AG04450 (cell line): ENCODE measurements at regions of chr10 and their contacts with region 1.

Region 1: GRCh38 chr10:58291538-58292174 is 22.7 kb downstream of the CISD1 start:
- DNase-seq: no peak
- H3K4me3 ChIP-seq: no peak overlapping the region
- H3K27ac ChIP-seq: no peak overlapping the region
- H3K27me3 ChIP-seq: no peaks in the 10 kb centered on the region
- CTCF ChIP-seq: peak; percentile 82

Region 2: GRCh38 chr10:58152673-58153263 is 138.9 kb before region 1 on chr10:
- CTCF ChIA-PET with region 1: interaction called, 18 read pairs
- POLR2A ChIA-PET with region 1: no interaction called
- DNase-seq: peak; percentile 23
- H3K4me3 ChIP-seq: no peak overlapping the region
- H3K27ac ChIP-seq: no peak overlapping the region
- H3K27me3 ChIP-seq: no peaks in the 10 kb centered on the region
- CTCF ChIP-seq: peak; percentile 75

Region 3: GRCh38 chr10:58189269-58189668 is 102.4 kb before region 1 on chr10:
- CTCF ChIA-PET with region 1: interaction called, 13 read pairs
- POLR2A ChIA-PET with region 1: no interaction called
- DNase-seq: peak; percentile 37
- H3K4me3 ChIP-seq: no peak overlapping the region
- H3K27ac ChIP-seq: no peak overlapping the region
- H3K27me3 ChIP-seq: no peaks in the 10 kb centered on the region
- CTCF ChIP-seq: no peak

Region 4: DNA sequence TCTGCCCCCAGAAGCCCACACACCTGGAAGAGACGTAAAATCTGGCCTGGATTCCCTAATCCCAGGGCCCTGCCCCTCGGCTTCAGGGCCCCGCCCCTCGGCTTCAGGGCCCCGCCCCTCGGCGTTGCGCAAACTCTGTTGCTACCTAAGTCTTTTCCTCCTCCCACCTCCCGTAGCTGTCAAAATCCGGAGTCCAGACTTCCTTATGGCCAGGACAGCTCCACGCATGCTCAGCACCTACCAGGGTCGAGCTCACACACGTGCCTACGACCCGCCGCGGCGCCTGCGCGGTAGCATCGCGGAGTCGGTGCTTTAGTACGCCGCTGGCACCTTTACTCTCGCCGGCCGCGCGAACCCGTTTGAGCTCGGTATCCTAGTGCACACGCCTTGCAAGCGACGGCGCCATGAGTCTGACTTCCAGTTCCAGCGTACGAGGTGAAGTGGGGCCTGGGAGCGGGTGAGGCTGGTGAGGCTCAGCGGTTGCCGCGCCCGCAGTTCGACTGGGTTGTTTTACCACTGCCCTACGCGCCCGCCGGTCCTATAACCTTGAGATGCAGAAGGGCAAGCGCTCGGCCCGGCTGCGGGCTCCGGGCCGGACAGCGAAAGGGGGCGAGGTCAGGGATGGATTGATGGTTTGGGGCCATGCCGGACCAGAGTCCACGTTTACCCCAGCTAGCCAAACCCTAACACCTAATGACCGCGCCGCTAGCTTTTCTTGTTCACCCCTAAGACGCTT is 22.6 kb before region 1 on chr10 and contains the start of gene CISD1:
- CTCF ChIA-PET with region 1: interaction called, 21 read pairs
- POLR2A ChIA-PET with region 1: interaction called, 4 read pairs
- DNase-seq: peak; percentile 99
- H3K4me3 ChIP-seq: peak within 1 kb of the TSS; percentile 87
- H3K27ac ChIP-seq: peak within 1 kb of the TSS; percentile 94
- H3K27me3 ChIP-seq: no peaks in the 10 kb centered on the region
- CTCF ChIP-seq: no peak
- polyA plus RNA-seq, gene CISD1: 59.9 and 80.0 TPM in 2 replicates

Region 5: GRCh38 chr10:58275908-58276307 is 15.7 kb before region 1 on chr10:
- CTCF ChIA-PET with region 1: interaction called, 21 read pairs
- POLR2A ChIA-PET with region 1: no interaction called
- DNase-seq: no peak
- H3K4me3 ChIP-seq: no peak overlapping the region
- H3K27ac ChIP-seq: no peak overlapping the region
- H3K27me3 ChIP-seq: no peaks in the 10 kb centered on the region
- CTCF ChIP-seq: no peak